Mammary epithelial cell (primary cell): ENCODE measurements at regions of chrX and their contacts with region 1.

Region 1: GRCh38 chrX:16958356-16958755 is 11.9 kb downstream of the REPS2 start:
- DNase-seq: no peak
- H3K4me3 ChIP-seq: no peak overlapping the region
- H3K27ac ChIP-seq: no peak overlapping the region
- H3K4me1 ChIP-seq: peaks cover 10% of the 10 kb centered on the region
- H3K27me3 ChIP-seq: peaks cover 1% of the 10 kb centered on the region
- CTCF ChIP-seq: no peak

Region 2: DNA sequence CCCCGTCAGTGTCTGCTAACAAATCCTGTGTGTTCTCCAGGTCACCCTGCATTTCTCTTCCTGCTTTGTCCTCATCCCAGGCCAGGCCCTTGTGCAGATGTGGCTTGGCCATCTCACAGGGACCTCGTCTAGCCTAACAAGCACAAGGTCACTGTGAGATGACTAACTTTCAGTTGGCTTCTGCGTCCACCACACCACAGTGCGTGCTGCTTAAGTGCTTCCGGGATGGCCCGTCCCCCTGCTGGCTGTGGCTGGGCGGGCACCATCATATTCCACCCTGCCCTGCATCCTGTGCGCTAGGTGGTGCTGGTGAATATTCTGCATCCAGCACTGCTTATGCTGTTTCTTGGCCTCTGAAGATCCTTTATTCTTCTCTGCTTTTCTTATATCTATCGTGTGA is 122.0 kb before region 1 on chrX:
- CTCF ChIA-PET with region 1: no interaction called
- dilution Hi-C with region 1: no loop called
- in situ Hi-C with region 1: no loop called
- intact Hi-C with region 1: no loop called
- DNase-seq: no peak
- H3K4me3 ChIP-seq: no peak overlapping the region
- H3K27ac ChIP-seq: no peak overlapping the region
- H3K4me1 ChIP-seq: peaks cover 7% of the 10 kb centered on the region
- H3K27me3 ChIP-seq: no peaks in the 10 kb centered on the region
- CTCF ChIP-seq: peak in 1 of 2 donors; percentile 31

Region 3: DNA sequence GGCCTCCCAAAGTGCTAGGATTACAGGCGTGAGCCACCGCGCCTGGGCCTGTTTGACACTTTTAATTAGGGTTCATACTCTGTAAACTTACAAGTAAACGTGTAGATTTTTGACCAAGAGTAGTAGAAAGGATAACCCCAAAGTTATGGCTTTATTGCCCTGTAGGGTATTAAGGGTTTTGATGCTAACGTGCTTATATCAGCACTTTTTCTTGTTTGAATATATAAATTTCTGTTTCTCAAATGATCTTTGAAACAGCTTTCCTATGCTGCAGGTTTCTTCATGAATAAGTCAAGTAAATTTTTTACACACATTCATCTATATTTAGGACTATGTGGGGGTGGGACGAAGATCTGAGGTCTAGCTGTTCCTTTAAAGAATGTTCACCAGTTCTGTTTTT is 41.2 kb before region 1 on chrX:
- CTCF ChIA-PET with region 1: no interaction called
- dilution Hi-C with region 1: loop called (anchors 5 kb)
- in situ Hi-C with region 1: no loop called
- intact Hi-C with region 1: no loop called
- DNase-seq: no peak
- H3K4me3 ChIP-seq: no peak overlapping the region
- H3K27ac ChIP-seq: no peak overlapping the region
- H3K4me1 ChIP-seq: no peaks in the 10 kb centered on the region
- H3K27me3 ChIP-seq: peaks cover 3% of the 10 kb centered on the region
- CTCF ChIP-seq: no peak